ENCODE measurements at regions of chr5 and their contacts with region 1.

Region 1: DNA sequence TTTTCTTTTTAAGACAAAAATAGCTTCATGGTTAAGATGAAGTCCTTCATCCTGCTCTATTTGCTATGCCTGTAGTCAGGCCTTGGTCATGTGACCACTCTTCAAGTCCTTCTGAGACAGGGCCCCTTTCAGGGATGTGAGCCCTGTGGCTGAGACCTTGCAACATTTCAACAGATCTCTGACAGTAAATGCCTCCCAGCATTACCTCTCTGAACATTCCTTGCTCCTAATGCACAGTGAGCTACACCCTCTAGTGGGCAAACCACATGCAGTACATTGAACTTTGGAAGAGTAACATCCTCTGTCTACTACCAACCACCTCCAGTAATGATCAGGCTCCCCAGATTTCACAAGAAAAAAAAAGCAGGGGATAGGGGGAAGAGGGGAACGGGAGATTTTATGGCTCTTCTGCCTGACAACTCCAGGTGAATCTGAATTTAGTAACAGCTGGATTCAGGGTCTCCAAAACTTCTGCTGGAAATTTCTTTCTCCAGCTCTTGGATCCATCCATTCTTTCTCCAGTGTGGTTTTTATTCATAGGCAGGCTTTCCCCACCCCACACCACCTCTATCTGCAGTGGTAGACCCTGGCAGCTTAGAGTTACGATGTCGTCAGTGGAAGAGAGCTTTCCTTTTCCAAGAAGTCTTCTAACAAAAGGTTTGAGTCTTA is 8.9 kb upstream of the FBXO38 start:
- DNase-seq: peak; percentile 74
- H3K4me3 ChIP-seq: no peak overlapping the region
- H3K27ac ChIP-seq: no peak overlapping the region
- H3K4me1 ChIP-seq: 0 out of 2 replicates have a peak, but pooled peaks cover 8% of the 10 kb centered on the region
- H3K27me3 ChIP-seq: no peaks in the 10 kb centered on the region

Region 2: GRCh38 chr5:147734894-147735293 is 639.9 kb before region 1 on chr5:
- in situ Hi-C with region 1: no loop called
- DNase-seq: no peak
- H3K4me3 ChIP-seq: no peak overlapping the region
- H3K27ac ChIP-seq: no peak overlapping the region
- H3K4me1 ChIP-seq: no peaks in the 10 kb centered on the region
- H3K27me3 ChIP-seq: no peaks in the 10 kb centered on the region

Region 3: DNA sequence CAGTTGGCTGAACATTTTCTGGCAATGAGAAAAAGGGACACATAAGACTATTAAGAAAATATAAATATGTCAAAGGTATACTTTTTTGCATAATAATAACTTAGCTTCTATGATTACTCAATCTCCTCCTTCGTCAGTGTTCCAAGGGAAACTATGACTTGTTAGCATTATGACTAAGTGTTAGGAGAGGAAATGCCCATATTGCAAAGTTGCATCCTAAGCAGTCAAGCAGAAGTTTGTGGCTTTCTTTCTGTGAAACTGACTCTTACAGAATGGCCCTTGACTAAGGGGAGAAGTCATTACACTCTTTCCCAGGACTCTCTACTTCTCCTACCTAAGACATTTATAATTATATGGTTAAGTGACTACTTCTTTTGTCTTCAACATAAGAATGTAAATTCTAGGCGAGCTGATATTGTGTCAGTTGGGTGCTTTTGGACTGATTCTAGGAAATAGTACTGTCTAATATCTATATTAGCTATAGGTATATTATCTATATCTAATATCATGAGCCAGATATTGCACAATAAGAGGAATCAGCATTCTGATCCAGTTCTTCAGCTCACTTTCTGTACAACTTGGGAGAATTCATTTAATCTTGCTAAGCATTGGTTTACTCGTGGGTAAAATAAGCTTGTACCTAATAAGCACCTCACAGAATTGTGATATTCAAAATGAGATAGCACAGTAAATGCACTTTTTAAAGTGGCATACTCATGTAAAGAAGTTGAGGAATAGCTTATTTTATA is 188.4 kb before region 1 on chr5:
- in situ Hi-C with region 1: loop called (anchors 10 kb)
- DNase-seq: peak; percentile 80
- H3K4me3 ChIP-seq: no peak overlapping the region
- H3K27ac ChIP-seq: no peak overlapping the region
- H3K4me1 ChIP-seq: peaks cover 2% of the 10 kb centered on the region; the same call in 1 of the 2 replicates
- H3K27me3 ChIP-seq: peaks cover 4% of the 10 kb centered on the region; the same call in 1 of the 2 replicates